K562 (cell line): ENCODE measurements at regions of chr6 and their contacts with region 1.

Region 1: GRCh38 chr6:27132532-27133280 is 114.8 kb upstream of the PRSS16 start:
- DNase-seq: peak; percentile 93 to 100 (median 97)
- ATAC-seq: peak; percentile 68
- H3K4me3 ChIP-seq: peak overlapping the region; percentile 72
- H3K27ac ChIP-seq: peak overlapping the region; percentile 98
- H3K4me1 ChIP-seq: peaks cover 6 to 7% of the 10 kb centered on the region in 2 experiments
- H3K27me3 ChIP-seq: no peaks in the 10 kb centered on the region
- CTCF ChIP-seq: peak in 1 of 3 experiments; percentile 7; a peak in 1 of 6 replicates
- EP300 ChIP-seq: peak; percentile 26; the same call in 1 of the 2 replicates
- POLR2A ChIP-seq: peak; percentile 100
- RAD21 ChIP-seq: peak in 1 of 2 experiments; percentile 36; a peak in 2 of 4 replicates

Region 2: DNA sequence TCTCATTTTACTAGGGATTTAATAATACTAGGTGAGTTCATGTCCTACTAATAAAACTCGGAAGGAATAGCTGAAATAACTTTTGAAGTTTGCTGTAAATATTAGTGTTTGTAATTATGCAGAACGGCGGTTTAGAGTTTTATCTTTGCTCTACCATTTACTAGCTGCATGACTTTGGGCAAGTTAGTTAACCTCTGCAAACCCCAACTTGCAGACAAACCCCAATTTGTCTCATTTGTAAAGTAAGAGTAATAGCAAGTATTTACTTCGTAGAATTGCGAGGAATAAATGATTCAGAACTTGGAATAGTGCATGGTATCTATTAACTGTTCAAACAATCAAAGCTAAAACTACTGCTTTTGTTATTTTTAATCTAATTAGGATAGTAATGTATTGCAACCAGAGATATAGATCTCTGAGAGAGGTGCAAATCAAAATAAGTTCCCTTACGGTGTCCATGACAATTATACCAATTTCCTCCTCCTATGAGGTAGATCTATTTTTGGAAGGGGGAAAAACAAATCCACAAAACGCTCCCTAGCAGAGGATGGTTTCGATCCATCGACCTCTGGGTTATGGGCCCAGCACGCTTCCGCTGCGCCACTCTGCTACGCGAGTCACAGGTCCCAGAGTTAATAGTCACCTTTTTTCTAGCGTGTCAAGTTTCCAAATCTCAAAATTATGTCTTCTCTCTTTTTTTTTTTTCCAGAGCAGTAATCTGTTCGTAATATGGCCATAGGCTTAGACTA is 802.8 kb before region 1 on chr6:
- CTCF ChIA-PET with region 1: no interaction called
- POLR2A ChIA-PET with region 1: no interaction called
- in situ Hi-C with region 1: no loop called
- intact Hi-C with region 1: loop called (anchors 10 kb)
- DNase-seq: peak in 3 of 4 experiments; percentile 56 to 88 (median 59)
- ATAC-seq: peak; percentile 40
- H3K4me3 ChIP-seq: peak overlapping the region; percentile 49
- H3K27ac ChIP-seq: peak overlapping the region; percentile 62; the same call in 2 of the 3 replicates
- H3K4me1 ChIP-seq: peaks cover 13 to 28% of the 10 kb centered on the region in 2 experiments; a peak in 4 of 5 replicates
- H3K27me3 ChIP-seq: no peaks in the 10 kb centered on the region
- CTCF ChIP-seq: no peak
- EP300 ChIP-seq: peak; percentile 81
- POLR2A ChIP-seq: no peak
- RAD21 ChIP-seq: 0 out of 4 replicates have a peak, but pooled peaks of 1 of the 2 experiments have one; percentile 4

Region 3: GRCh38 chr6:26596579-26597388 is 535.9 kb before region 1 on chr6 and contains the start of gene ABT1:
- CTCF ChIA-PET with region 1: interaction called, 3 read pairs
- POLR2A ChIA-PET with region 1: interaction called, 11 read pairs
- in situ Hi-C with region 1: no loop called
- intact Hi-C with region 1: no loop called
- DNase-seq: peak; percentile 95 to 100 (median 97)
- ATAC-seq: peak; percentile 83
- H3K4me3 ChIP-seq: peak within 1 kb of the TSS; percentile 91
- H3K27ac ChIP-seq: peak within 1 kb of the TSS; percentile 88
- H3K4me1 ChIP-seq: peaks cover 16 to 19% of the 10 kb centered on the region in 2 experiments; a peak in 4 of 5 replicates
- H3K27me3 ChIP-seq: no peaks in the 10 kb centered on the region
- CTCF ChIP-seq: no peak; a peak in 1 of 6 replicates
- EP300 ChIP-seq: peak; percentile 82
- POLR2A ChIP-seq: peak; percentile 97
- RAD21 ChIP-seq: 0 out of 4 replicates have a peak, but pooled peaks of 1 of the 2 experiments have one; percentile 4
- polyA plus RNA-seq, gene ABT1: 8.8 to 25.2 TPM

Region 4: DNA sequence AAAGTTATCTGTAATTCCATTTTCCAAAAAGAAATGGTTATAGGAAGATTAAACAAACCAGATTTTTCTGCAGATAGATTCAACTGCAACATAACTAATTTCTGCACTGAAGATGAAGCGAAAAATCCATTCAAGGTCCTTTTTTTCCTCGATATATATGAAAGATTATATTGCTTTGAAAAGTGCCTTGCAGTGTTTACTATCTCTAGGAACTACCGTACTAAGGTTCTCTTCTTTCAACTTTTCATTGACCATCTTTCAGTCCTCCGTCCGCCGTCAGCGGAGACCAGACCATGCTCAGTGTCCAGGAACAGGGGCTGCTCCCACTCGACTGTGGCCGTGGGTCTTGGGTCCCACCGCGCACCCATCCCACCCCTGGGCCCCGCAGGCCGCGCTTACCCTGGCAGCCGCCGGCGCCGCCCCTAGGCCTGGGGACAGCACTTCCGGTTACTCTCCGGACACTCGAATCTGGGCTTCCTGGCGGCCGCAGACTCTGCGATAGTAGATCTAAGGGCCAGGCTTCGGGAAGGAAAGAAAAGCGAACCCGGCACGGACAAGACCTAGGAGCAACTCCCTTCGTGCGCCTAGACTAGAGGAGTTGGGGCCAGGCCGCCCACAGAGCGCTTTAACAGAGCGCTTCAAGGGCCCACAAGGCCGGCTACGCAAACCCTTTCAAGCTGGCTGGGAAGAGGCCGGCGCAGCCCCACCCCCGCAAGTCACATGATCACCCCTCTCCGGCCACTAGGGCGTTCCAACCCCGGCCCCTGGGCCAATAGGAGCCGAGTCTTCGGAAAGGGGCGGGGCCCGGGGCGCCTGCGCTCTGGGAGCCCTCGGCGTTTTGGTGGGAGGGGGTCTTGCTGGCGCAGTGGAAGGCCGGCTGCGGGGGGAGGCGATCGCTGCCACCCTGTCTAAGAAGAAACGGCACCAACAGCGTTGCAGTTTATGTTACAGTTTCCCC is 473.4 kb before region 1 on chr6 and contains the start of gene ZNF322:
- CTCF ChIA-PET with region 1: no interaction called
- POLR2A ChIA-PET with region 1: no interaction called
- in situ Hi-C with region 1: no loop called
- intact Hi-C with region 1: no loop called
- DNase-seq: peak; percentile 98 to 99 (median 99)
- ATAC-seq: peak; percentile 100
- H3K4me3 ChIP-seq: peak within 1 kb of the TSS; percentile 63
- H3K27ac ChIP-seq: peak within 1 kb of the TSS; percentile 52
- H3K4me1 ChIP-seq: peaks cover 3 to 14% of the 10 kb centered on the region in 2 experiments; a peak in 3 of 5 replicates
- H3K27me3 ChIP-seq: peaks cover 4 to 6% of the 10 kb centered on the region in 2 experiments
- CTCF ChIP-seq: no peak
- EP300 ChIP-seq: no peak; the same call in 1 of the 2 replicates
- POLR2A ChIP-seq: peak; percentile 93
- RAD21 ChIP-seq: no peak
- polyA plus RNA-seq, gene ZNF322: 4.7 to 7.1 TPM

Region 5: DNA sequence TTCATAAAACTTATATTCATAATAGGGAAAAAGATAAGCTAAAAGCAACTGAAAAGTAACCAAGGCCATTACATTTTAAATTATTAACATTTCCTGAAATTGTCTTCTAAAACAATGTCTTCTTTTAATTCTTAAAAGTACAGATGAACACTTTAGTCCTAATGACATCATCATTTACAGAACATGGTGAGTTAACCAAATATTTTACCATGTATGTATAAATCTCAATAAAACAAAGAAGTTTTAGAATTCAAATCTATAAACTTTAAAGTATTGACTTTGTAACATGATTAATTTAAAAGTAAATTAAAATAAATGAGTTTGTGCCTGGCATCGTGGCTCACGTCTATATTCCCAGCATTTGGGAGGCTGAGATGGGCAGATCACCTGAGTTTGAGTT is 11.1 kb before region 1 on chr6:
- CTCF ChIA-PET with region 1: interaction called, 4 read pairs
- POLR2A ChIA-PET with region 1: interaction called, 19 read pairs
- in situ Hi-C with region 1: no loop called
- intact Hi-C with region 1: no loop called
- DNase-seq: no peak
- ATAC-seq: no peak
- H3K4me3 ChIP-seq: no peak overlapping the region
- H3K27ac ChIP-seq: no peak overlapping the region
- H3K4me1 ChIP-seq: peaks cover 1 to 3% of the 10 kb centered on the region in 2 experiments; a peak in 2 of 5 replicates
- H3K27me3 ChIP-seq: no peaks in the 10 kb centered on the region
- CTCF ChIP-seq: no peak
- EP300 ChIP-seq: no peak
- POLR2A ChIP-seq: no peak
- RAD21 ChIP-seq: no peak

Region 6: DNA sequence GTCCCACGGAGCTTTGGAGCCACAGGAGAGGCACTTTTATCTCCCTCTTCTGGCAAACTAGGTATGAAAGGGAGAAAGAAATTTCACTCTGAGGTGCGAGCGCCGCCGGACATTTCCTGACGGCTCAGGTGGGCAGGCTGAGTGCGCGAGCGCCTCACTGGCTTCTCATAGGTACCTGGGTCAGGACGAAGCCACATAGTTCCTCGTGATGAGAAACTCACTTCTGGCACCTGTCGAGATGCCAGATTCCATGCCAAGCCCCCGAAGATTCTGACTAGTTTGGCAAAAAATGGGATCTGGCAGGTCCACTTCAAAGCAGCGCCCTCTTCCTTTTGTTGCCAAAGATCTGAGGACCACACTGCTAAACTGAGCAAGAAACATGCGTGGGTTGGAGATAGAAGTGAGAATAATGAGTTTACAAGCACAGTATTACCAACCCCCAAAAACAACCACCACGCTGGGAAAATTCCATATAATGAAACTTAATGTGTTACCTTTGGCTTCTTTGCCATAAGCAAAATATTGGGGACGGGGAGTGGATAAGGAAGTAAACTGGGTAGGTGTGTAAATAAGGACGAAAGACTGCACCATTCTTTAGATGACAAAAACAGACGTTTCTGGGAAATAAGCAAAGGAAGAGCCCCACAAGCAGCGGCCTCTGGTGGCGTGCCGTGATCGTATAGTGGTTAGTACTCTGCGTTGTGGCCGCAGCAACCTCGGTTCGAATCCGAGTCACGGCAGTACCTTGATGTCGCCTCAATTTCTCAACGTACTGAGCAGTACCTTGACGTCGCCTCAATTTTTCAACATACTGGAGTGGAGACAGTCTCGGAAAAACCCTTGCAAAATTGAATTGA is 25.0 kb after region 1 on chr6:
- CTCF ChIA-PET with region 1: interaction called, 16 read pairs
- POLR2A ChIA-PET with region 1: interaction called, 19 read pairs
- in situ Hi-C with region 1: no loop called
- intact Hi-C with region 1: loop called (anchors 1 kb)
- DNase-seq: peak; percentile 63 to 93 (median 70)
- ATAC-seq: peak; percentile 87
- H3K4me3 ChIP-seq: peak overlapping the region; percentile 54
- H3K27ac ChIP-seq: peak overlapping the region; percentile 46
- H3K4me1 ChIP-seq: peaks cover 10% of the 10 kb centered on the region in 2 experiments; a peak in 3 of 5 replicates
- H3K27me3 ChIP-seq: no peaks in the 10 kb centered on the region
- CTCF ChIP-seq: peak; percentile 73 to 77 (median 75)
- EP300 ChIP-seq: peak; percentile 49
- POLR2A ChIP-seq: 0 out of 2 replicates have a peak, but pooled peaks have one; percentile 12
- RAD21 ChIP-seq: peak; percentile 71 to 76

Region 7: DNA sequence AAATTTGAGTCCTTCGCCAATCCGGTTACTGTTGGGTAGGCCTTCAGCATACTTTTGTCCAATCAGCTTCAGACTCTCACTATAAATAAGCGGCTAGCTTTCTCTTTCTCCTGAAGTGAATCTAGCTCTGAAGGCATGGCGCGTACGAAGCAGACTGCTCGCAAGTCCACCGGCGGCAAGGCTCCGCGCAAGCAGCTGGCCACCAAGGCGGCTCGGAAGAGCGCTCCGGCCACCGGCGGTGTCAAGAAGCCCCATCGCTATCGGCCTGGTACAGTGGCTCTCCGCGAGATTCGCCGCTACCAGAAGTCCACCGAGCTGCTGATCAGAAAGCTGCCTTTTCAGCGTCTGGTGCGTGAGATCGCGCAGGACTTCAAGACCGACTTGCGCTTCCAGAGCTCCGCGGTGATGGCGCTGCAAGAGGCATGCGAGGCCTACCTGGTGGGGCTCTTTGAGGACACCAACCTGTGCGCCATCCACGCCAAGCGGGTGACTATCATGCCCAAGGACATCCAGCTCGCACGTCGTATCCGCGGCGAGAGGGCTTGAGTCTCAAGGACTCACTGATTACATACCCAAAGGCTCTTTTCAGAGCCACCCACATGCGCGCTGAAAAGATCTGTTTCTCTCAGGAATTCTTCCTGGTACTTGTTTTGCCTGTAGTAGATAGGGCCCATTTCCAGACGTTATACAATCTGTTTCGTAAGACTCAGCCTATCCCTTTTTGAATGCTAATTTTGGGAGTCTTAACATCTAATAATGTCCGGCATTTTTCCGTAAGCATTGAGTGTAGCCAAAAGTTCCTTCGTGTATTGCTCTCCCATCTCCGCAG is 677.4 kb after region 1 on chr6:
- CTCF ChIA-PET with region 1: no interaction called
- POLR2A ChIA-PET with region 1: interaction called, 23 read pairs
- in situ Hi-C with region 1: no loop called
- intact Hi-C with region 1: loop called (anchors 1 kb)
- DNase-seq: peak; percentile 70 to 96 (median 82)
- ATAC-seq: peak; percentile 60
- H3K4me3 ChIP-seq: peak overlapping the region; percentile 71
- H3K27ac ChIP-seq: peak overlapping the region; percentile 86
- H3K4me1 ChIP-seq: peaks cover 4 to 20% of the 10 kb centered on the region in 2 experiments; a peak in 4 of 5 replicates
- H3K27me3 ChIP-seq: no peaks in the 10 kb centered on the region
- CTCF ChIP-seq: peak in 2 of 3 experiments; percentile 25 to 36; a peak in 3 of 6 replicates
- EP300 ChIP-seq: 0 out of 2 replicates have a peak, but pooled peaks have one; percentile 2
- POLR2A ChIP-seq: peak; percentile 100
- RAD21 ChIP-seq: peak; percentile 10 to 35; a peak in 2 of 4 replicates

Region 8: GRCh38 chr6:27864906-27865849 is 732.5 kb after region 1 on chr6:
- CTCF ChIA-PET with region 1: no interaction called
- POLR2A ChIA-PET with region 1: interaction called, 12 read pairs
- in situ Hi-C with region 1: no loop called
- intact Hi-C with region 1: no loop called
- DNase-seq: peak; percentile 38 to 84 (median 68)
- ATAC-seq: peak; percentile 49
- H3K4me3 ChIP-seq: peak overlapping the region; percentile 45
- H3K27ac ChIP-seq: peak overlapping the region; percentile 73
- H3K4me1 ChIP-seq: peaks cover 15 to 16% of the 10 kb centered on the region in 2 experiments; a peak in 4 of 5 replicates
- H3K27me3 ChIP-seq: no peaks in the 10 kb centered on the region
- CTCF ChIP-seq: no peak
- EP300 ChIP-seq: no peak
- POLR2A ChIP-seq: peak; percentile 96
- RAD21 ChIP-seq: no peak